Mammary epithelial cell (primary cell): ENCODE measurements at regions of chr1 and their contacts with region 1.

Region 1: GRCh38 chr1:235971571-235972310 is 93.1 kb downstream of the NID1 start:
- DNase-seq: peak; percentile 88
- H3K4me3 ChIP-seq: peak overlapping the region; percentile 9 to 29 (median 24)
- H3K27ac ChIP-seq: peak overlapping the region; percentile 91
- H3K4me1 ChIP-seq: peaks cover 16% of the 10 kb centered on the region
- H3K27me3 ChIP-seq: no peaks in the 10 kb centered on the region
- CTCF ChIP-seq: peak; percentile 80 to 90

Region 2: DNA sequence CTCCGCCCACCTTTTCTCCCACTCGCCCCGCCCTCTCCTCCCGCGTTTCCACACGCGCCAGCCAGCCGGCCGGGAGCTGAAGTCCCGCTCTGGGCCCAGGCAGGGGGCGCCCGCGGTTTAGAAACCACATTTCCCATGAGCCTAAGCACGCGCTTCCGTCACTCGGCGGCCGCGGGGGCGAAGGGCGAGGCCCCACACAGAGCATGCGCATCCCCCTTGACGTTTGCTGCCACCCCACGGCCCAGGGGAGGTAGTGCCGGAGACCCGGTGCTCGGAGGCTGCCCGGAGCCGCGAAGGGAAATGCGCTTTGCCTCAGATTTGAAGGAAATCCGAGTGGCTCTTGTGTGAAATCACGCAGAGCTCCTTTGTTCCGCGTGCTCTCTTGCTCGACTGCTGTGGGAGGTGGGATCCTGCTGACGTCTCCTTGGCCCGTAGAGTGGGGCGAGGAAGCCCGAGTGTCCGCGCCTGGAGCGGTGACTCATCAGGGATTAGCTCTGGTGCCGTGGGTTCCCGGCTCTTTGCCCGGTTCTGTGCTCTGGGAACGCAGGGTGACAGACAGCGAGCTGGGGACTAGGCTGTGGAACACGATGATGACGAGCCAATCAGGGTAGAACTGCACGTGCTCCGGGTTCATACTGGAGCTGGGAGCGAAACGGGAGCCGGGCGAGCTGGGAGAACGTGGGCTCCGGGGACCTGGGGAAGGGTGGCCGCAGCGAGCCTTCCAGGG is 467.1 kb before region 1 on chr1:
- CTCF ChIA-PET with region 1: interaction called, 7 read pairs
- dilution Hi-C with region 1: no loop called
- in situ Hi-C with region 1: loop called in 1 of 2 experiments (anchors 25 kb)
- intact Hi-C with region 1: loop called (anchors 2 kb)
- DNase-seq: peak; percentile 99
- H3K4me3 ChIP-seq: peak overlapping the region; percentile 93 to 96 (median 95)
- H3K27ac ChIP-seq: peak overlapping the region; percentile 97
- H3K4me1 ChIP-seq: peaks cover 4% of the 10 kb centered on the region
- H3K27me3 ChIP-seq: no peaks in the 10 kb centered on the region
- CTCF ChIP-seq: peak; percentile 65 to 88

Region 3: GRCh38 chr1:235708390-235708962 is 263.3 kb before region 1 on chr1:
- CTCF ChIA-PET with region 1: interaction called, 4 read pairs
- dilution Hi-C with region 1: no loop called
- in situ Hi-C with region 1: no loop called
- intact Hi-C with region 1: loop called (anchors 10 kb)
- DNase-seq: peak; percentile 95
- H3K4me3 ChIP-seq: no peak overlapping the region
- H3K27ac ChIP-seq: peak overlapping the region; percentile 56
- H3K4me1 ChIP-seq: peaks cover 18% of the 10 kb centered on the region
- H3K27me3 ChIP-seq: no peaks in the 10 kb centered on the region
- CTCF ChIP-seq: no peak

Region 4: DNA sequence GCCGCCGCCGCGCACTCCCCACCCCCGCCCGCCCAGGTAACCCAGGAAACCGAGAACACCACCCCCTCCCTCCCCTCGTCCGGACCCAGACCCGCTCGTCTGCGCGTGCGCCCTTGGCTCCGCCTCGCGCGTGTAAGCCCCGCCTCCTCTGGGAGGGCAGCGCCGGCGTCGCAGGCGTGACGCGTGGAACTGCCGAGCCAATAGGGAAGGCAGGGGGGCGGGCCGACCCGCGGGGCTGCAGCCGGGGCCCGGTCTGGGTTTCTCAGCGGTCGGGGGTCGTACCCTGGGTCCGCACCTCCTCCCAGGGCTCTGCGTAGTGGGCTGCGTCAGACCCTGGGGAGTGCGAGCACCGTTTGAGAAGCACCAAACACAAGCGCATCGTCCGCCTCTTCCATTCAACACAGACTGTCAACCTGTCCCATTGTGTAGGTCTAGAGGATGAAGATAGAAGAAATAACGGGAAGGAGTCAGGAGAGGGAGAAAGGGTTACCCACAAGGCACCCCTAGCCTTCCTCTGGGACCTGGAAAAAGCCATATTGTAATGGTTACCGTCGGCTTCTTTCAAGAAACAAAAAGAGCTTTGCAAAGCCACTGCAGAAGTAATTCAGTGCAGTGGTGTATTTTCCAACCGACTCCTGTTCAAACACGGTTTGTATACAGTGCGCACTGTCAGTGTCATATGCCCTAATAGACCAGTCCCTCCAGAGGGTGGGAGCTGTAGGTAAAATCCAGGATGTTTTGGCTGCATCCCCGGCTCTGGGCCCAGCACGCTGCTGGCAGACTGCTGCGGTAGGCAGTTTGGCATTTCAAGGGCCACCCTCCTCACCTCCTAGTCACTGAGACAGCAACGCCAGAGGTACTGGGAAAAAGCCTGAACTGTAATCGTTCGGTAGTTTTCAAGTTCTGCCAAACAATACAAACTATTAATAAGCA is 104.6 kb before region 1 on chr1:
- CTCF ChIA-PET with region 1: interaction called, 26 read pairs
- dilution Hi-C with region 1: no loop called
- in situ Hi-C with region 1: loop called in 1 of 2 experiments (anchors 5 kb)
- intact Hi-C with region 1: loop called (anchors 1 kb)
- DNase-seq: peak; percentile 95
- H3K4me3 ChIP-seq: peak overlapping the region; percentile 92 to 94 (median 93)
- H3K27ac ChIP-seq: peak overlapping the region; percentile 45
- H3K4me1 ChIP-seq: peaks cover 25% of the 10 kb centered on the region
- H3K27me3 ChIP-seq: no peaks in the 10 kb centered on the region
- CTCF ChIP-seq: no peak

Region 5: GRCh38 chr1:235917267-235917811 is 54.4 kb before region 1 on chr1:
- CTCF ChIA-PET with region 1: interaction called, 7 read pairs
- dilution Hi-C with region 1: loop called (anchors 5 kb)
- in situ Hi-C with region 1: no loop called
- intact Hi-C with region 1: loop called (anchors 1 kb)
- DNase-seq: peak; percentile 100
- H3K4me3 ChIP-seq: no peak overlapping the region
- H3K27ac ChIP-seq: peak overlapping the region; percentile 96
- H3K4me1 ChIP-seq: peaks cover 63% of the 10 kb centered on the region
- H3K27me3 ChIP-seq: no peaks in the 10 kb centered on the region
- CTCF ChIP-seq: no peak

Region 6: DNA sequence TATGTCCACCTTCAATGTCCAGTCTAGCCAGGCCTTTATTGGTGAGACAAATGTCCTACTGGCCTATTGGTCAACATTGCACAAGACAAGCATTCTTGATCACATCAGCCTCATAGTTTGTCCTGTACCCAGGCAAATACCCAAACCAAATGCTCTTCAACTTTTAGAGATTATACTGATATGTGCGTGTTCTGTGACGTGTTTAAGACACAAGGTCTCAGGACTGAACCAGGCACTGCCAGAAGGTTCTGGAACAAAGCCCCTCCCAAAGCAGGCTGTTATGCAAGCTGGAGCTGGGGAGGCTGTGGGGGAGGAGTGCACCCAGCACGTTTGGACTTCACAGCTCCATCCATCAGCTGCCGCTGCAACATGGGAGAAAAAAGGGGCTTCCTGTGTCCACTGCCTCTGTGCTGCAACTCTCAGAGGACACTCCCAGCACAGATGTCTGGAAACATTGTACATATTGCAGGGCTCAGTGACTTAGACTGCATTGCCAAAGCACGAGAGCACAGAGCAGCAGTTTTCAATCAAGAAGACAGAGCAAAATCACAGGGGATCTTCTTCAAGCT is 47.2 kb after region 1 on chr1:
- CTCF ChIA-PET with region 1: no interaction called
- dilution Hi-C with region 1: loop called (anchors 5 kb)
- in situ Hi-C with region 1: no loop called
- intact Hi-C with region 1: no loop called
- DNase-seq: no peak
- H3K4me3 ChIP-seq: no peak overlapping the region
- H3K27ac ChIP-seq: no peak overlapping the region
- H3K4me1 ChIP-seq: peaks cover 22% of the 10 kb centered on the region
- H3K27me3 ChIP-seq: no peaks in the 10 kb centered on the region
- CTCF ChIP-seq: no peak